ENCODE measurements at regions of chr19 and their contacts with region 1.

Region 1: GRCh38 chr19:36573020-36573885 is at the start of gene ZNF529:
- DNase-seq: peak; percentile 96
- H3K4me3 Mint-ChIP-seq: peak within 1 kb of the TSS; percentile 94
- H3K27ac Mint-ChIP-seq: peak within 1 kb of the TSS; percentile 92
- H3K4me1 Mint-ChIP-seq: peaks cover 23% of the 10 kb centered on the region
- H3K27me3 Mint-ChIP-seq: no peaks in the 10 kb centered on the region
- CTCF ChIP-seq: no peak
- total RNA-seq, gene ZNF529: 8.9 and 11.9 TPM in 2 replicates

Region 2: DNA sequence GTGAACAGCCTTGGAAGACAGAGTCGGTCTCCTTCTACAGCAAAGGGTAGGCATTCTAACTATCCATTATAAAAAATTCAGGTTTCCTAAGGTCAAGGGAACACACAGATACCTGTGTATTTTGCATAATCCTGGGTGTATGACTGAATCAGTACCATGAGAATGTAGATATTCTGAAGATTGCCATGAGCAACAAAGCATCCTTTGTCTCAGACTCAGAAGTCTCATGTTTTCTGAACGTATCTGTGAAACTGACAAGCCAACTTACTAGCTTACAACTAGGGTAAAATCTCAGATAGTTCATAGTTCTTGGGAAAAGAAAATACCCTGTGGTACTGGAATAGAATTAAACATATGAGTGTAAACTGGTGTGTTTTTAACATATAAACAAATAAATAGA is 90.4 kb before region 1 on chr19:
- CTCF ChIA-PET with region 1: no interaction called
- intact Hi-C with region 1: no loop called
- DNase-seq: no peak
- H3K4me3 Mint-ChIP-seq: no peak overlapping the region
- H3K27ac Mint-ChIP-seq: no peak overlapping the region
- H3K4me1 Mint-ChIP-seq: no peaks in the 10 kb centered on the region
- H3K27me3 Mint-ChIP-seq: no peaks in the 10 kb centered on the region
- CTCF ChIP-seq: no peak

Region 3: GRCh38 chr19:36498861-36499260 is 74.4 kb before region 1 on chr19:
- CTCF ChIA-PET with region 1: no interaction called
- intact Hi-C with region 1: no loop called
- DNase-seq: no peak
- H3K4me3 Mint-ChIP-seq: no peak overlapping the region
- H3K27ac Mint-ChIP-seq: no peak overlapping the region
- H3K4me1 Mint-ChIP-seq: no peaks in the 10 kb centered on the region
- H3K27me3 Mint-ChIP-seq: no peaks in the 10 kb centered on the region
- CTCF ChIP-seq: no peak

Region 4: GRCh38 chr19:36528194-36528920 is 44.9 kb before region 1 on chr19 and contains the start of gene ZNF260:
- CTCF ChIA-PET with region 1: interaction called, 3 read pairs
- intact Hi-C with region 1: loop called (anchors 5 kb)
- DNase-seq: peak; percentile 95
- H3K4me3 Mint-ChIP-seq: peak within 1 kb of the TSS; percentile 100
- H3K27ac Mint-ChIP-seq: peak within 1 kb of the TSS; percentile 98
- H3K4me1 Mint-ChIP-seq: peaks cover 11% of the 10 kb centered on the region
- H3K27me3 Mint-ChIP-seq: no peaks in the 10 kb centered on the region
- CTCF ChIP-seq: no peak
- total RNA-seq, gene ZNF260: 14.1 and 17.8 TPM in 2 replicates

Region 5: GRCh38 chr19:36687214-36688056 is 114.2 kb after region 1 on chr19 and contains the start of gene ZNF567:
- CTCF ChIA-PET with region 1: interaction called, 3 read pairs
- intact Hi-C with region 1: loop called (anchors 10 kb)
- DNase-seq: peak; percentile 99
- H3K4me3 Mint-ChIP-seq: peak within 1 kb of the TSS; percentile 100
- H3K27ac Mint-ChIP-seq: peak within 1 kb of the TSS; percentile 99
- H3K4me1 Mint-ChIP-seq: peaks cover 27% of the 10 kb centered on the region
- H3K27me3 Mint-ChIP-seq: no peaks in the 10 kb centered on the region
- CTCF ChIP-seq: no peak
- total RNA-seq, gene ZNF567: 11.0 TPM in 2 replicates

Region 6: DNA sequence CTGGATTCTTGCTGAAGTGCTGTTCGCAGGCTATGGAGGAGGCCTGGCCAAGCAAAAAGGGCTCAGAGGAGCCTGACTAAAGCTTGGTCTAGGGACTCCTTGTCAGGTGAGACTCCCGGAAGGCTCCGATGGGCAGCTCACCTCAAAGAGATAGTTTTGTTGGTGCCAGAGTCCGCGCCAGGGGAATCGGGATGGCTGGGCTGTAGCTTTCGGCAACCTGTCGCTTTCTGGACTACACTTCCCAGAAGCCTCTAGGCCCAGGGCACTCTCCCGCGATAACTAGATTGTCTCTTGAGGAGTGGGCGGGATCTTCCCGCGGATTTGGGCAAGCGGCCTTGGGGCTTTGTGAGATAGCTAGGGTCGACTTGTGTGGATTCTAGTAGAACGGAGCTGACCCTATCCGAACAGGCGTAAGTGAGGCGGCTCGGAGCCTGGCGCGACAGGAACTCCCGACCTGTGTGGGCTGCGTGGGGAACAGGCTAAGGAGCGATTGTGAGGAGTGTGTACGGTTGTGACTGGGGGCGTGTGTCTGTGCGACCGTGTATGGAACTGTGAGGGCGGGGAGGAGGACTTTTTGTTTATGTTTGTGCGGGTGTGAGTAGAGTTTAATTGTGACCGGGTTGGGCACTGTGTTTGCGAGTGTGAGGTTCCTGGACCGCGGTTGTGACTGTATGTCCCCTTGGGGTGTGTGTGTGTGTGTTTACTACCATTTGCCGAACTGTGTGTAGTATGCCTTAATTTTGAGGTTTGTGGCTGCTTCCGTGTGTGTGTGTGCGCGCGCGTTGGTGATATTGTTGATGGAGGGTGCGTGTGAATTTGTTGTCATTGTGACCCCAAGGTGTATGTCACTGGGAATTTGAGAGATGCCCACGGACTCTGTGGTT is 277.5 kb after region 1 on chr19 and contains the start of gene ZNF345:
- CTCF ChIA-PET with region 1: no interaction called
- intact Hi-C with region 1: loop called (anchors 5 kb)
- DNase-seq: peak; percentile 86
- H3K4me3 Mint-ChIP-seq: no peak within 1 kb of the TSS
- H3K27ac Mint-ChIP-seq: no peak within 1 kb of the TSS
- H3K4me1 Mint-ChIP-seq: no peaks in the 10 kb centered on the region
- H3K27me3 Mint-ChIP-seq: no peaks in the 10 kb centered on the region
- CTCF ChIP-seq: no peak
- total RNA-seq, gene ZNF345: 5.0 and 5.3 TPM in 2 replicates

Measured in Calu3 (cell line).